ENCODE measurements at regions of chr17 and their contacts with region 1.

Region 1: GRCh38 chr17:78798695-78799559 is 16.9 kb upstream of the CYTH1 start:
- DNase-seq: peak in 5 of 9 donors; percentile 54 to 65 (median 59)
- ATAC-seq: peak; percentile 56
- H3K4me3 ChIP-seq: no peak overlapping the region
- H3K4me3 Mint-ChIP-seq: peak overlapping the region in 8 of 10 donors; percentile 11 to 60 (median 45)
- H3K27ac ChIP-seq: no peak overlapping the region
- H3K27ac Mint-ChIP-seq: peak overlapping the region; percentile 68 to 95 (median 86)
- H3K4me1 ChIP-seq: peaks cover 7 to 27% of the 10 kb centered on the region in 2 donors
- H3K4me1 Mint-ChIP-seq: peaks cover 42 to 78% (median 63%) of the 10 kb centered on the region in 7 donors
- H3K27me3 ChIP-seq: no peaks in the 10 kb centered on the region
- H3K27me3 Mint-ChIP-seq: no peaks in the 10 kb centered on the region

Region 2: DNA sequence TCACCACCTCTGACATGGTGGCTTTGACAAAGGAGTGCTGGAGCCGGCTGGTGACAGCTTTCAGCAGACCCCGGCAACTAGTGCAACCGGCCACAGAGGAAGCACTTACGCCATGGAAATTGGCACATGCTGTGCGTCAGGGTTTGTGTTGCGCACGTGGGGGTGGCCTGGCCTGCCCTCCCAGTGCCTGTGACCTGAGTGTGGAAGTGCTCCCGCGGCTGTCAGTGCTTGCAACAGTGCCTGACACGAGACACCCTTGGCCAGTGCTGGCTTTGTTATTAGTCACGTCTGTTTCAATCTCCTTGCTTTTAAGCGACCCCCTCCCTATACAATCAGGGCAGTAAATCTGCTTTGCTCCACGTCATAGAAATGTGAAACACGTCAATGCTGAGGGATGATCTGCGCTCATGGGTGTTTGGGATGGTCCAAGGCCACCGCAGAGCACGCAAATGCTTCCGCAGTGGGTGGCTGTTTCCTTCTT is 356.2 kb before region 1 on chr17:
- CTCF ChIA-PET with region 1: no interaction called
- POLR2A ChIA-PET with region 1: no interaction called
- intact Hi-C with region 1: loop called in 1 of 2 experiments (anchors 2 kb)
- DNase-seq: no peak
- ATAC-seq: peak; percentile 89
- H3K4me3 ChIP-seq: no peak overlapping the region
- H3K4me3 Mint-ChIP-seq: no peak overlapping the region
- H3K27ac ChIP-seq: no peak overlapping the region
- H3K27ac Mint-ChIP-seq: no peak overlapping the region
- H3K4me1 ChIP-seq: no peaks in the 10 kb centered on the region
- H3K4me1 Mint-ChIP-seq: peaks cover 0 to 5% (median 0%) of the 10 kb centered on the region in 7 donors
- H3K27me3 ChIP-seq: no peaks in the 10 kb centered on the region
- H3K27me3 Mint-ChIP-seq: peaks cover 0 to 3% (median 0%) of the 10 kb centered on the region in 5 donors

Region 3: GRCh38 chr17:78497115-78497540 is 301.8 kb before region 1 on chr17:
- CTCF ChIA-PET with region 1: interaction called, 3 read pairs
- POLR2A ChIA-PET with region 1: no interaction called
- intact Hi-C with region 1: loop called in 1 of 2 experiments (anchors 5 kb)
- DNase-seq: peak in 8 of 9 donors; percentile 21 to 64 (median 48)
- ATAC-seq: peak; percentile 76
- H3K4me3 ChIP-seq: no peak overlapping the region
- H3K4me3 Mint-ChIP-seq: no peak overlapping the region
- H3K27ac ChIP-seq: no peak overlapping the region
- H3K27ac Mint-ChIP-seq: no peak overlapping the region
- H3K4me1 ChIP-seq: no peaks in the 10 kb centered on the region
- H3K4me1 Mint-ChIP-seq: peaks cover 0 to 2% (median 0%) of the 10 kb centered on the region in 7 donors
- H3K27me3 ChIP-seq: no peaks in the 10 kb centered on the region
- H3K27me3 Mint-ChIP-seq: peaks cover 0 to 4% (median 0%) of the 10 kb centered on the region in 5 donors

Region 4: GRCh38 chr17:78708510-78708973 is 90.4 kb before region 1 on chr17:
- CTCF ChIA-PET with region 1: interaction called, 4 read pairs
- POLR2A ChIA-PET with region 1: no interaction called
- intact Hi-C with region 1: loop called in 1 of 2 experiments (anchors 1 kb)
- DNase-seq: peak; percentile 33 to 69 (median 58)
- ATAC-seq: peak; percentile 84
- H3K4me3 ChIP-seq: no peak overlapping the region
- H3K4me3 Mint-ChIP-seq: peak overlapping the region in 9 of 10 donors; percentile 30 to 80 (median 67)
- H3K27ac ChIP-seq: peak overlapping the region; percentile 56
- H3K27ac Mint-ChIP-seq: peak overlapping the region; percentile 30 to 95 (median 87)
- H3K4me1 ChIP-seq: peaks cover 35 to 39% of the 10 kb centered on the region in 2 donors
- H3K4me1 Mint-ChIP-seq: peaks cover 28 to 73% (median 64%) of the 10 kb centered on the region in 7 donors
- H3K27me3 ChIP-seq: no peaks in the 10 kb centered on the region
- H3K27me3 Mint-ChIP-seq: no peaks in the 10 kb centered on the region

Region 5: DNA sequence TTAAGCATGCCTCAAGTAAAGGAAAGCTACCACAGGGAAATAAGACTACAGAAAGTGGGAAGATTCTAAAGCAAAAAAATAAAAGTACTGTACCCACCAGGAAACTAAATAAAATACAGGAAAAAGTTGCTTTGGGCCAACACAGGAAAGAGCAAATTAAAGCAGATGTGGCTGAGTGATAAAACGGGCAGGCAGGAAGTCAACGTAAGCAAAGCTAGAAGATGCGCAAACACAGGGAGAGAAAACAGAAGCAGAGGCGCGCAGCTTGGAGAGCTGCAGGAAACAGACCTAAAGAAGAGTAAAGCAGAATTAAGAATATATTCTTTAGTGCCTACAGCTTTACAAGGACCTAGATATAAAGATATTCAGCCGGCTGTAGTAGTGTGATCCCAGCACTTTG is 20.0 kb after region 1 on chr17:
- CTCF ChIA-PET with region 1: interaction called, 5 read pairs
- POLR2A ChIA-PET with region 1: interaction called, 7 read pairs
- intact Hi-C with region 1: loop called in 1 of 2 experiments (anchors 2 kb)
- DNase-seq: peak in 7 of 9 donors; percentile 76 to 89 (median 86)
- ATAC-seq: peak; percentile 72
- H3K4me3 ChIP-seq: peak overlapping the region; percentile 37
- H3K4me3 Mint-ChIP-seq: peak overlapping the region; percentile 68 to 85 (median 78)
- H3K27ac ChIP-seq: peak overlapping the region; percentile 88
- H3K27ac Mint-ChIP-seq: peak overlapping the region; percentile 94 to 99 (median 96)
- H3K4me1 ChIP-seq: peaks cover 42 to 47% of the 10 kb centered on the region in 2 donors
- H3K4me1 Mint-ChIP-seq: peaks cover 36 to 76% (median 56%) of the 10 kb centered on the region in 7 donors
- H3K27me3 ChIP-seq: no peaks in the 10 kb centered on the region
- H3K27me3 Mint-ChIP-seq: no peaks in the 10 kb centered on the region

Measured in naive thymus-derived CD4-positive, alpha-beta T cell (primary cell).